CD4-positive, alpha-beta T cell (primary cell): ENCODE measurements at regions of chr5 and their contacts with region 1.

Region 1: DNA sequence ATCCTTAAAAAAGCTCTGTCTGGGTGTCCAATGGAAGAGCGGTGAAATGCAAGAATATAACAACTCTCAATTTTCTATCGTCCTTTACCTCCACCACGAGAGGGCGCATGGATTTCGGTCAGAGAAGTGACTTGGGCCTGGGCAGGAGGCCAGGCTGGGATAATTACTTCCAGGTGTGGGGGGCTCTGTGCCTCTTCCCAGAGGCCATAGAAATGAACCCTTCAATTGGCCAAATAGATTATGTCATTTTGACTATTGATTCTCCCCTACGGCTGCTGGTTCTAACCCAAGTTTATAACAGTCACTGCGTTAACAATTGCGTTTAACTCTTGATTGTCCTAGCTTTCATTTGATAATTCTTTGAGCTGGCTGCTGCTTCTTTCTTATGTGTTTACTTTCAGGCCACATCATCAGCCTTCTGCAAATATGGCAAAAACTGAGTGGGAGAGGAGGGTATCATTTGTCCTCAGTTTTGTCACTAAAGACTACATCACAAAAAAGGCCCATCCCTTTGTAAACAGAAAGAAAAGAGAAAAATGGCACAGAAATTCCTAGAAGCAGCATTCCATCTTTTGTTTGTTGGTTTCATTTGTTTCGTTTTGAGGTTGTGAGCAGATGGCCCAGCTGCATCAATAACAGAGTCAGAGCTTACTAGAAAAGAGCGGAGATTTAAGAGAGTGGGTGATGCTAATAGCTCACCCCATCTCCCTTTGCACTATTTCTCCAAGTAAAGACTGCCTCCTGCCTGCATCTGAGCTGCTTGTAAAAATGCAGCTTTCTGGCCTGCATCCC is 45.4 kb upstream of the ZFR start:
- DNase-seq: peak; percentile 56 to 85 (median 66)
- ATAC-seq: peak; percentile 71
- H3K4me3 ChIP-seq: no peak overlapping the region
- H3K4me3 Mint-ChIP-seq: no peak overlapping the region
- H3K27ac ChIP-seq: no peak overlapping the region
- H3K27ac Mint-ChIP-seq: no peak overlapping the region
- H3K4me1 ChIP-seq: no peaks in the 10 kb centered on the region
- H3K4me1 Mint-ChIP-seq: no peaks in the 10 kb centered on the region
- H3K27me3 ChIP-seq: no peaks in the 10 kb centered on the region
- H3K27me3 Mint-ChIP-seq: no peaks in the 10 kb centered on the region
- CTCF ChIP-seq: peak; percentile 89

Region 2: GRCh38 chr5:31614151-31615020 is 875.6 kb before region 1 on chr5:
- CTCF ChIA-PET with region 1: no interaction called
- POLR2A ChIA-PET with region 1: no interaction called
- intact Hi-C with region 1: no loop called
- DNase-seq: no peak
- ATAC-seq: no peak
- H3K4me3 ChIP-seq: no peak overlapping the region
- H3K4me3 Mint-ChIP-seq: no peak overlapping the region
- H3K27ac ChIP-seq: no peak overlapping the region
- H3K27ac Mint-ChIP-seq: no peak overlapping the region
- H3K4me1 ChIP-seq: peaks cover 4% of the 10 kb centered on the region
- H3K4me1 Mint-ChIP-seq: peaks cover 5% of the 10 kb centered on the region
- H3K27me3 ChIP-seq: peaks cover 6 to 10% of the 10 kb centered on the region in 2 experiments
- H3K27me3 Mint-ChIP-seq: peaks cover 35% of the 10 kb centered on the region
- CTCF ChIP-seq: no peak

Region 3: DNA sequence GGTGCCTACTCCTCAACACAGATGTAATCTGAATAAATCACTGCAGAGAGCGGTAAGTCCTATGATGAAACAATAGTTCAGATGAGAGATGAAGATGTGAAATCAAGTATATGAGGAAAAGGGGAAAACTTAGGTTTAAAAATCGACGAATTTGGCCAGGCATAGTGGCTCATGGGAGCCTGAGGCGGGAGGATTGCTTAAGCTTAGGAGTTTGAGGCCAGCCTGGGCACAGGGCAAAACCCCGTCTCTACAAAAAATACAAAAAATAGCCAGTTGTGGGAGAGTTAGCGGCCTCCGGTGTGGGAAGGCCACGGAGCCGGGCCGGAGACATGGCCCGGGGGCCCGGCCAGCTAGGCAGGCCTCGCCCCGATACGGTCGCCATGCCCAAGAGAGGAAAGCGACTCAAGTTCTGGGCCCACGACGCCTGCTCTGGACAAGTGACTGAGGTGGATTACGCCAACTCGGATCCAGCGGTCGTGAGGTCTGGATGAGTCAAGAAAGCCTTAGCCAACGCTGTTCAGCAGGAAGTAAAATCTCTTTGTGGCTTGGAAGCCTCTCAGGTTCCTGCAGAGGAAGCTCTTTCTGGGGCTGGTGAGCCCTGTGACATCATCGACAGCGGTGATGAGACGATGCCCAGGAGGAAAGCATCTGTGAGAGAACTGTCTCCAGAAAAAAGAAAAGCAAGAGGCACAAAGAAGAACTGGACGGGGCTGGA is 32.6 kb after region 1 on chr5:
- CTCF ChIA-PET with region 1: no interaction called
- POLR2A ChIA-PET with region 1: no interaction called
- intact Hi-C with region 1: loop called in 1 of 2 experiments (anchors 5 kb)
- DNase-seq: peak in 11 of 14 experiments; percentile 14 to 75 (median 44)
- ATAC-seq: peak; percentile 97
- H3K4me3 ChIP-seq: no peak overlapping the region
- H3K4me3 Mint-ChIP-seq: no peak overlapping the region
- H3K27ac ChIP-seq: no peak overlapping the region
- H3K27ac Mint-ChIP-seq: peak overlapping the region; percentile 32
- H3K4me1 ChIP-seq: peaks cover 9% of the 10 kb centered on the region
- H3K4me1 Mint-ChIP-seq: peaks cover 25% of the 10 kb centered on the region
- H3K27me3 ChIP-seq: no peaks in the 10 kb centered on the region
- H3K27me3 Mint-ChIP-seq: no peaks in the 10 kb centered on the region
- CTCF ChIP-seq: no peak

Region 4: GRCh38 chr5:32531885-32532520 is 42.0 kb after region 1 on chr5:
- CTCF ChIA-PET with region 1: interaction called, 10 read pairs
- POLR2A ChIA-PET with region 1: no interaction called
- intact Hi-C with region 1: loop called (anchors 2 to 5 kb)
- DNase-seq: peak; percentile 27 to 86 (median 45)
- ATAC-seq: peak; percentile 74
- H3K4me3 ChIP-seq: peak overlapping the region; percentile 53
- H3K4me3 Mint-ChIP-seq: peak overlapping the region; percentile 87
- H3K27ac ChIP-seq: peak overlapping the region; percentile 76 to 88
- H3K27ac Mint-ChIP-seq: peak overlapping the region; percentile 94
- H3K4me1 ChIP-seq: peaks cover 36% of the 10 kb centered on the region
- H3K4me1 Mint-ChIP-seq: peaks cover 53% of the 10 kb centered on the region
- H3K27me3 ChIP-seq: no peaks in the 10 kb centered on the region
- H3K27me3 Mint-ChIP-seq: no peaks in the 10 kb centered on the region
- CTCF ChIP-seq: no peak

Region 5: GRCh38 chr5:32613050-32613672 is 123.2 kb after region 1 on chr5:
- CTCF ChIA-PET with region 1: interaction called, 7 read pairs
- POLR2A ChIA-PET with region 1: no interaction called
- intact Hi-C with region 1: loop called (anchors 1 kb)
- DNase-seq: peak; percentile 72 to 89 (median 81)
- ATAC-seq: peak; percentile 91
- H3K4me3 ChIP-seq: no peak overlapping the region
- H3K4me3 Mint-ChIP-seq: no peak overlapping the region
- H3K27ac ChIP-seq: no peak overlapping the region
- H3K27ac Mint-ChIP-seq: no peak overlapping the region
- H3K4me1 ChIP-seq: no peaks in the 10 kb centered on the region
- H3K4me1 Mint-ChIP-seq: peaks cover 5% of the 10 kb centered on the region
- H3K27me3 ChIP-seq: no peaks in the 10 kb centered on the region
- H3K27me3 Mint-ChIP-seq: no peaks in the 10 kb centered on the region
- CTCF ChIP-seq: peak; percentile 95